Esophagus muscularis mucosa (tissue), 4 donors: ENCODE measurements at regions of chr2 and their contacts with region 1.

Region 1: DNA sequence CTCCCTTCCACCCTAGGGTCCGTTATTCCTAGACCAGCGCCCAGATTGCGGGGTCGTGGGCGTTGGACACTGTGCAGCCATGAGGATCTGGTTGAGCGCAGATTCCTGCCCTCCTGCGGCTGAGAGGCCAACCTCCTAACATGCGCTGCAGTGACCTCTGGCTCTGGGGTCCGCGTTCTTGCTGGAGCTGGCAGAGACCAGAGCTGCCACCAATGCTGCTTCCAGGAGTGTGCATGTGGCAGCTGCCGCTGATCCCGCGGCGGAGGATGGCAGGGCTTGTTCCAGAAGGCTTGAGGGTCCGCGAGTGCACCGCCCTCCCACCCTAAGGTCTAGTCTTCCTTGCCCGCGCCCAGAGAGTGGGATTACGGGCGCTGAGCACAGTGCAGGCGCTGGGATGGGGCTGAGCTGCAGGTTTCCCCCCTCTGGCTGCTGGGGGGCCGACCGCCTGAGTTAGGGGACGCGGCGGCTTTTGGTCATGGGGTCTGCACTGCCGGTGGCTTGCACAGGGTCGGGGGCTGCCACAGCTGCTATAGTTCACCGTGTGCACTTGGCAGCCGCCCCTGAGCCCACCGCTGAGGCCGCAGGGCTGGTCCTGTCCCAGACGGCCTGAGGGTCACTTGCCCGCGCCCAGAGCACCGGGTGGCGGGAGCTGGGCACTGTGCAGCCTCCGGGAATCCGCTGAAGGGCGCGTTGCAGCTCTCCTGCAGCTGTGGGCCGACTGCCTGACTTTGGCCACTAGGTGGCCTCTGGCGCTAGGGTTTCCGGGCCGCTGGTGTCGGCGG is 145.9 kb downstream of the CCDC74A start:
- DNase-seq: no peak
- H3K4me3 ChIP-seq: peak overlapping the region; percentile 44 to 53 (median 44)
- H3K27ac ChIP-seq: no peak overlapping the region
- H3K4me1 ChIP-seq: peaks cover 22 to 28% (median 24%) of the 10 kb centered on the region in 4 donors
- H3K27me3 ChIP-seq: peaks cover 0 to 26% (median 2%) of the 10 kb centered on the region in 4 donors
- CTCF ChIP-seq: peak; percentile 80 to 93 (median 86)
- EP300 ChIP-seq: no peak
- POLR2A ChIP-seq: no peak

Region 2: DNA sequence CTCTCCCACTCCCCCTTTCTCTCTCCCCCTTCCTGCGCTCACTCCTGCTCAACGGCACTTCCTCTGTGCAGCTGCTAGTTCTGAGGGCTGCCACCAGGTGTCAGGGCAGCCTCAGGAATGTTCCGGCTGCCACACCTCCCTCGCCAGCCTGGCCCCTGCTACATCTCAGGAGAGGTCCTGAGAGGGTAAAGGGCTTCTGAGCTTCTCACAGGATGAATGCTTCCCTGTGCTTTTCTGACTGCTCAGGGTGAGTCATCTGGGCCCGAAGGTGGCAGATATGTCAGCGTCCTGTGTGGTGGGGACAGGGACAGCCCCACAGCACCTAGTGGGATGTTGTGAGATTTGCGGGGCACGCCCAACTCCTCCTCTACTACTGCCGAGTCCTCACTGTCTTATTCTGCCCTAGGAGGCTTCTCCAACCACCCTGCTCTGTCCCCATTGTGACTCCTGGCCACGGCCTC is 519.5 kb before region 1 on chr2:
- intact Hi-C with region 1: loop called (anchors 10 kb)
- DNase-seq: no peak
- H3K4me3 ChIP-seq: no peak overlapping the region
- H3K27ac ChIP-seq: no peak overlapping the region
- H3K4me1 ChIP-seq: peaks cover 0 to 8% (median 5%) of the 10 kb centered on the region in 4 donors
- H3K27me3 ChIP-seq: no peaks in the 10 kb centered on the region
- CTCF ChIP-seq: peak; percentile 75 to 88 (median 76)
- EP300 ChIP-seq: no peak
- POLR2A ChIP-seq: no peak

Region 3: DNA sequence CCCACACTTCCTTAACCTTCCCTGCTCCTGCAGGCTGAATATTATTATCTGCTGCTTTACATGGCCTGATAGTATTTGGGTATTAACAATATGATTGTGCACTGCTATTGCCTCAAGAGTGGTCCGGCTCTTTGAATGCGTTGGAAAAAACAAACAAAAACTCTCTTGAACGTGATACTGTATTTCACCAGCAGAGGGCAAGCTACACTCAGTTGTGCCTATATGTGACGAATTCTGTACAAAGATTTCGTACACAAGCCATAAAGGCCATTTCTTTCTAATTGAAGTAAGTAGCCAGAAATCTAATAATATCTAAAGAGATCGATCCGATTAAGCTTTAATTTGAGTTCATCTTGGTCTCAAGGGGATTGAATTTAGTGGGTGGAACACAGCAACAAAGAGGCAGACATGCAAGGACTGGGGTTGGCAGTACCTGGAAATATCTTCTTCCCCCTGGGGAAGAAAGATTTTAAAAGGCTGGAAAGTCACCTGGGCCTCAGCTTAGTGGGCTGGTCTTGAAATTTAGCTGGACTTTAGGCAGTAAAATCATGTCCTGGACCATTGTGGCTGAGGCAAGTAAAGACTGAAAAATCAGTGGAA is 260.3 kb before region 1 on chr2:
- intact Hi-C with region 1: loop called (anchors 5 kb)
- DNase-seq: no peak
- H3K4me3 ChIP-seq: no peak overlapping the region
- H3K27ac ChIP-seq: no peak overlapping the region
- H3K4me1 ChIP-seq: no peaks in the 10 kb centered on the region
- H3K27me3 ChIP-seq: peaks cover 0 to 10% (median 3%) of the 10 kb centered on the region in 4 donors
- CTCF ChIP-seq: peak; percentile 66 to 83 (median 68)
- EP300 ChIP-seq: no peak
- POLR2A ChIP-seq: no peak

Region 4: DNA sequence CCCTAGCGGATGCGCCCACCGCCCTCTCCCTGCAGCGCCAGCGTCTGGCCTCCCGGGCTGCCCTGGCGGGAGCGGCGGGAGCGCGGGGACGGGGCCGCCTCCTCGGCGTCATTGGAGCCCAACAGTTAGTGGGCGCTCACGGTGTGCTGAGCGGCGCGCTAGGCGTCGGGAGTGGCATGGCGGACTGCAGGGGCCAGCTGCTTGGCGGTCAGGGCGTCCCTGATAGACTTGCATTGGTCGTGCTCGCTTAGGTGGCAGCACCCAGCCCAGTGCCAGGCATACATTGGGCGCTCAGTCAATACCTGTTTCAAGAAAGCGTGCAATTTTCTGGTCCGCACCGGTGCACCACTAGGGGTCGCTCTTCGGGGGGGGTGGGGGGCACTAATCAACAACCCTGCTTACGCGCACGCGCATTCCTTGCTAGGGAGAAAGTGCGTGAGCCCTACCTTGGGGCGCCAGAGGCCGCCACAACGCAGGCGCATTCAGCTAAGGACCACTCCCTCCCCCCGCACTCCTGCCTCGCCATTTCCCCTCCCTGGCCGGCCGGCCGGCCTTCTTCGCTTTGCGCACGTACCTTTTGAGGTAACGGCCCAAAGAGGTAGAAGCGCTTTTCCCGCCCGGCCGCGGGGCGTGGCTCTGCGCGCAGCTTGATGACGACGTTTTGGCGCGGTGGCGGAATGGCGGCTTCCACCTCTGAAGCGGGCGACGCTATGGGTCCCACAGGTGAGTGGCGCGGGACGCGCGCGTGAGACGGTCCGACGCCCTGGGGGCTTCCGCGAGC is 181.0 kb before region 1 on chr2:
- intact Hi-C with region 1: loop called (anchors 10 kb)
- DNase-seq: peak; percentile 96
- H3K4me3 ChIP-seq: peak overlapping the region; percentile 88 to 93 (median 90)
- H3K27ac ChIP-seq: peak overlapping the region; percentile 88 to 92 (median 90)
- H3K4me1 ChIP-seq: peaks cover 23 to 39% (median 33%) of the 10 kb centered on the region in 4 donors
- H3K27me3 ChIP-seq: no peaks in the 10 kb centered on the region
- CTCF ChIP-seq: peak; percentile 55 to 81 (median 57)
- EP300 ChIP-seq: no peak
- POLR2A ChIP-seq: no peak

Region 5: GRCh38 chr2:131543371-131543891 is 130.2 kb before region 1 on chr2:
- intact Hi-C with region 1: no loop called
- DNase-seq: peak; percentile 53
- H3K4me3 ChIP-seq: no peak overlapping the region
- H3K27ac ChIP-seq: no peak overlapping the region
- H3K4me1 ChIP-seq: no peaks in the 10 kb centered on the region
- H3K27me3 ChIP-seq: peaks cover 0 to 5% (median 0%) of the 10 kb centered on the region in 4 donors
- CTCF ChIP-seq: no peak
- EP300 ChIP-seq: no peak
- POLR2A ChIP-seq: no peak

Region 6: GRCh38 chr2:131801210-131801744 is 127.7 kb after region 1 on chr2:
- intact Hi-C with region 1: loop called (anchors 2 kb)
- DNase-seq: no peak
- H3K4me3 ChIP-seq: peak overlapping the region; percentile 44 to 57 (median 50)
- H3K27ac ChIP-seq: no peak overlapping the region
- H3K4me1 ChIP-seq: peaks cover 10 to 19% (median 16%) of the 10 kb centered on the region in 4 donors
- H3K27me3 ChIP-seq: peaks cover 0 to 15% (median 0%) of the 10 kb centered on the region in 4 donors
- CTCF ChIP-seq: no peak
- EP300 ChIP-seq: no peak
- POLR2A ChIP-seq: no peak